T-cell (primary cell): ENCODE measurements at regions of chr9 and their contacts with region 1.

Region 1: DNA sequence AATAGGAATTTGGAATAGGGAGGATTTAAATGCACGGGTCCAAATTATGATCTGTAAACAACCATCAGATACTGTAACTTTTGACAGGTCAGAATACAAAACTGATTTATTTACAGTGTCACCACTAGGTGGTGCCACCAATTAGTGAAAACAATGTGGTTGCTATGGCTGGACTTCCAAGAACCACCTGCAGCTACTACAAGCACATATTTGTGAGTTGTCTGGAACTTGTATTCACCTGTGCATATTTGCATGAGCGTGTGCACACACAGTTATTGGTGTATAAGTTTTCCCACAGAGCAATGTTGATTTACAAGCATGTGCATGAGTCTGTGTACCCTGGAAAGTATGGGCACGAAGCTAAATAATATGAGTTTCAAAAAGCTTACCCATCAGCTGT is 3.0 kb upstream of the HRCT1 start:
- DNase-seq: peak in 15 of 35 experiments; percentile 13 to 75 (median 26)
- ATAC-seq: peak; percentile 58 to 66 (median 59)
- H3K4me3 ChIP-seq: no peak overlapping the region
- H3K4me3 Mint-ChIP-seq: no peak overlapping the region
- H3K27ac ChIP-seq: no peak overlapping the region
- H3K27ac Mint-ChIP-seq: no peak overlapping the region
- H3K4me1 ChIP-seq: peaks cover 8 to 33% of the 10 kb centered on the region in 2 experiments
- H3K4me1 Mint-ChIP-seq: peaks cover 23 to 40% (median 28%) of the 10 kb centered on the region in 3 donors
- H3K27me3 ChIP-seq: peaks cover 0 to 7% of the 10 kb centered on the region in 2 experiments
- H3K27me3 Mint-ChIP-seq: peaks cover 4 to 8% of the 10 kb centered on the region in 2 donors

Region 2: GRCh38 chr9:35945341-35946018 is 42.4 kb after region 1 on chr9:
- CTCF ChIA-PET with region 1: interaction called, 8 to 20 read pairs
- POLR2A ChIA-PET with region 1: interaction called in 1 of 2 experiments, 3 read pairs
- DNase-seq: peak; percentile 17 to 76 (median 52)
- ATAC-seq: peak; percentile 66 to 70 (median 67)
- H3K4me3 ChIP-seq: no peak overlapping the region
- H3K4me3 Mint-ChIP-seq: peak overlapping the region in 1 of 3 donors; percentile 63
- H3K27ac ChIP-seq: no peak overlapping the region
- H3K27ac Mint-ChIP-seq: peak overlapping the region; percentile 10 to 28
- H3K4me1 ChIP-seq: peaks cover 41 to 47% of the 10 kb centered on the region in 2 experiments
- H3K4me1 Mint-ChIP-seq: peaks cover 60 to 70% (median 69%) of the 10 kb centered on the region in 3 donors
- H3K27me3 ChIP-seq: no peaks in the 10 kb centered on the region
- H3K27me3 Mint-ChIP-seq: no peaks in the 10 kb centered on the region